Activated CD4-positive, alpha-beta T cell treated with anti-CD3 and anti-CD28 coated beads for 36 hours (primary cell): ENCODE measurements at regions of chr20 and their contacts with region 1.

Region 1: DNA sequence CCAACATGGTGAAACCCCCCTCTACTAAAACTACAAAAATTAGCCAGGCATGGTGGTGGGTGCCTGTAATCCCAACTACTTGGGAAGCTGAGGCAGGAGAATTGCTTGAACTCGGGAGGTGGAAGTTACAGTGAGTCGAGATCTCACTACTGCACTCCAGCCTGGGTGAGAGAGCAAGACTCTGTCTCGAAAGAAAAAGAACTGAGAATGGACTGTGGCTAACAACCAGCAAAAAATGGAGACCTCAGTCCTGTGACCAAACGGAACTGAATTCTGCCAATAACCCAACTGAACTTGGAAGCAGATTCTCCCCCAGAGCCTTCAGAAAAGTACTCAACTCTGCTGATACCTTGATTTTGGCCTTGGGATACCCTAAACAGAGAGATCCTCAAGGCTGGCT is 604.5 kb downstream of the DOK5 start:
- DNase-seq: no peak
- ATAC-seq: no peak
- H3K4me3 Mint-ChIP-seq: no peak overlapping the region
- H3K27ac Mint-ChIP-seq: no peak overlapping the region
- H3K4me1 Mint-ChIP-seq: no peaks in the 10 kb centered on the region
- H3K27me3 Mint-ChIP-seq: no peaks in the 10 kb centered on the region

Region 2: DNA sequence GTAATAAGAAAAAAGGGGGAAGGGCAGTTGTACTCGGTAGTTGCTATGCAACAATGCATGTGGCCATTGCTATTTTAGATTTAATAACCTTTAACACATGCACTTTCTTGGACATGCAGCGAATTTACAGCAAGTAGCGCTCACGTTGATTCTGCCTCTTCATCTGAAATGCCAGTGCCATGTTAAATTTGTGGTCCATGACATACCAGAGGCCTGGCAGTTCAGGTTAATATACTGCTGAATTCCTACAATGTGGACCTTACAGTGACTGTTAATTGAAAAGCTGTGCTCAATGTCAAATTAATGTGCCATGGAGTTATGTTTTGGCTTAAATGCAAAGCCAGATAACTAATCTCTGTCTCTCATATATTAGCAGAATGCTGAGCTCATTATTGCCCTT is 95.2 kb after region 1 on chr20:
- CTCF ChIA-PET with region 1: no interaction called
- POLR2A ChIA-PET with region 1: no interaction called
- intact Hi-C with region 1: loop called in 1 of 2 experiments (anchors 5 kb)
- DNase-seq: no peak
- ATAC-seq: no peak
- H3K4me3 Mint-ChIP-seq: no peak overlapping the region
- H3K27ac Mint-ChIP-seq: no peak overlapping the region
- H3K4me1 Mint-ChIP-seq: no peaks in the 10 kb centered on the region
- H3K27me3 Mint-ChIP-seq: no peaks in the 10 kb centered on the region